Right ventricle myocardium superior (tissue), 1 donor: ENCODE measurements at regions of chr19 and their contacts with region 1.

Region 1: GRCh38 chr19:48835734-48836088 is 580 bp downstream of the HSD17B14 start:
- DNase-seq: peak; percentile 96
- ATAC-seq: peak; percentile 98

Region 2: GRCh38 chr19:48794291-48794966 is 41.3 kb before region 1 on chr19:
- intact Hi-C with region 1: loop called (anchors 1 kb)
- DNase-seq: no peak
- ATAC-seq: no peak

Region 3: DNA sequence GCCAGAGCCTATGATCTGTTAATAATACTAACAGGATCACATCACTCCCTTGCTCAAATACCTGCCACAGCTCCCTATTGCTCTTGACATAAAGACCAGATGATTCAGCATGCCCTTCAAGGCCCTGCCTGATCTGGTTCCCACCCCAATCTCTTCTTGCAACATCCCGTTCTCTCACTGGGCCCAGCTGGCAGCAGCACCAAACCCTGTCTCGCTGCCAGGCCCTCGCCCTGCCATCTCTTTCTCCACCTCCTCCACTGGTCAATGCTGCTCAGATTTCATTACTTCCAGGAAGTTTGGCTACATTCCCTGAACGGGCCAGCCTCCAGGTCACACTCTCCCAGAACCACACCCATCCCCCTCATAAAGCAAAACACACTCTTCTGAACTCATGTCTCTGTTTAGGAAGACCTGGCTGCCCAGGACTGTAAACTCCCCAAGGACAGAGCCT is 16.3 kb before region 1 on chr19:
- intact Hi-C with region 1: no loop called
- DNase-seq: peak; percentile 93
- ATAC-seq: peak; percentile 93